ENCODE measurements at regions of chr1 and their contacts with region 1.

Region 1: GRCh38 chr1:215028954-215029353 is 53.6 kb upstream of the KCNK2 start:
- DNase-seq: no peak
- ATAC-seq: no peak
- H3K4me3 Mint-ChIP-seq: no peak overlapping the region
- H3K27ac Mint-ChIP-seq: no peak overlapping the region
- H3K4me1 Mint-ChIP-seq: no peaks in the 10 kb centered on the region
- H3K27me3 Mint-ChIP-seq: peaks cover 8% of the 10 kb centered on the region

Region 2: GRCh38 chr1:214966346-214966745 is 62.6 kb before region 1 on chr1:
- CTCF ChIA-PET with region 1: no interaction called
- POLR2A ChIA-PET with region 1: no interaction called
- intact Hi-C with region 1: no loop called
- DNase-seq: no peak
- ATAC-seq: no peak
- H3K4me3 Mint-ChIP-seq: no peak overlapping the region
- H3K27ac Mint-ChIP-seq: no peak overlapping the region
- H3K4me1 Mint-ChIP-seq: no peaks in the 10 kb centered on the region
- H3K27me3 Mint-ChIP-seq: peaks cover 7% of the 10 kb centered on the region

Region 3: DNA sequence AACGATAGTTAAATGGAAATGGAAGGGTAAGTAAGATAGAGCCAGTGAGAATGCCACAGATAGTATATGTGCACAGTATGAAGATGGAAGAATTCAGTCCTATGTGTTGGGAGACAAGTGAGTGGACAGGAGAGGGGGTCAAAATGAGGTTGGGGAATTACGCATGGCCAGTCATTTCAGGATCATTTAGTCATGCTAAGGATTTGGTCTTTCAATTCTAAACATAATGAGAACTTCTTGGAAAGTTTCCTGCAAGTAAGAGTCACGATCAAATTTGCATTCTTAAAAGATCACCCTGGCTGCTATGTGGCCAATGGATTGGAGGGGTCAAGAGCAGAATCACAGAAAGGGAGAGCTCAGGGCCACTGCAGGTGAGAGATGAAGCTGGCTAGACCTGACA is 10.4 kb before region 1 on chr1:
- CTCF ChIA-PET with region 1: interaction called, 3 read pairs
- POLR2A ChIA-PET with region 1: interaction called, 12 read pairs
- intact Hi-C with region 1: no loop called
- DNase-seq: no peak
- ATAC-seq: no peak
- H3K4me3 Mint-ChIP-seq: no peak overlapping the region
- H3K27ac Mint-ChIP-seq: no peak overlapping the region
- H3K4me1 Mint-ChIP-seq: no peaks in the 10 kb centered on the region
- H3K27me3 Mint-ChIP-seq: peaks cover 2% of the 10 kb centered on the region